ENCODE measurements at regions of chr11 and their contacts with region 1.

Region 1: DNA sequence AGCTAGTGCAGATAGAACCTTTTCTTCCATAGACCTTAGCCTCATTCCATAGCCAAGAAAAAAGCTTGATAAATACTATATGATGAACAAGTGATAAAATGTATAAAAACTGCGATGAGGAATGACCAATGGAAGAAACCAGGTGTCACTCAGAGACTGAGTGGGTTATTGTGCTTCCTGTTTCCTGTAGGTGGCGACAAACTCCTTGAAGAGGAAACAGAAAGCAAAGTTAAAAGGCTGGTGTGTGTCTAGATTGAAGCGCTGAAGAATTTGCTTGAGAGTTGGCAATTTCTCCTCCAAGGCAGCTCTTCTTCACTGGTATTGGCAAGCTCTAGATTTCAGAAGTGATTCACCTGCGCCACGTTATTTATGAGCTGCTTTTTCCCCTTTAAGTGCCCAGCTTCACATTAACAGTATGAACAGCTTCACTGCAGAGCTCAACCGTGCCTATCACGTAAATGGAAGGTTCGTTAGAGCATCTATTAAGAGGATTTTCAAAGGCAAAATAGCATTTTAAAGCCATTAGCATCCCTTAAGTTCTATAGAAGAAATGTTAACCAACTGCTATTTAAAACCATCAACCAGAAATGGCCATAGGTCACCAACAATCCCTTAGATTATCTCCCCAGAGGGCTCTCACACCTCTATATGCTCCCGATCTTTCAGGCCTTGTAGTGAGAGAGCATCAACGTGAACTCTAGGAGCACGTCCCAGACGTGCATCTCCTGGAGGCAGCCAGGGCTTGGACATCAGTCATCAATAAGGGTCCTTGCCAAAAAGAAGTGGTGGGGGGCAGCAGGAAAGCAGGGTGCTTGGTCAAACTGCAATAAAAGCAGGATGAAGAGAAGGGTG is 179.4 kb downstream of the CADM1 start:
- DNase-seq: peak; percentile 33
- H3K4me3 ChIP-seq: no peak overlapping the region; a peak in 1 of 4 replicates
- H3K27ac ChIP-seq: peak overlapping the region in 1 of 2 experiments; percentile 39; a peak in 1 of 4 replicates
- H3K4me1 ChIP-seq: peaks cover 0 to 14% of the 10 kb centered on the region in 2 experiments; a peak in 2 of 4 replicates
- H3K27me3 ChIP-seq: no peaks in the 10 kb centered on the region
- CTCF ChIP-seq: peak; percentile 82
- EP300 ChIP-seq: no peak
- RAD21 ChIP-seq: peak; percentile 90

Region 2: GRCh38 chr11:115314330-115314920 is 10.4 kb before region 1 on chr11:
- CTCF ChIA-PET with region 1: interaction called, 11 read pairs
- POLR2A ChIA-PET with region 1: no interaction called
- DNase-seq: no peak
- H3K4me3 ChIP-seq: no peak overlapping the region
- H3K27ac ChIP-seq: no peak overlapping the region
- H3K4me1 ChIP-seq: peaks cover 0 to 8% of the 10 kb centered on the region in 2 experiments; a peak in 2 of 4 replicates
- H3K27me3 ChIP-seq: no peaks in the 10 kb centered on the region
- CTCF ChIP-seq: no peak
- EP300 ChIP-seq: no peak
- RAD21 ChIP-seq: no peak

Region 3: DNA sequence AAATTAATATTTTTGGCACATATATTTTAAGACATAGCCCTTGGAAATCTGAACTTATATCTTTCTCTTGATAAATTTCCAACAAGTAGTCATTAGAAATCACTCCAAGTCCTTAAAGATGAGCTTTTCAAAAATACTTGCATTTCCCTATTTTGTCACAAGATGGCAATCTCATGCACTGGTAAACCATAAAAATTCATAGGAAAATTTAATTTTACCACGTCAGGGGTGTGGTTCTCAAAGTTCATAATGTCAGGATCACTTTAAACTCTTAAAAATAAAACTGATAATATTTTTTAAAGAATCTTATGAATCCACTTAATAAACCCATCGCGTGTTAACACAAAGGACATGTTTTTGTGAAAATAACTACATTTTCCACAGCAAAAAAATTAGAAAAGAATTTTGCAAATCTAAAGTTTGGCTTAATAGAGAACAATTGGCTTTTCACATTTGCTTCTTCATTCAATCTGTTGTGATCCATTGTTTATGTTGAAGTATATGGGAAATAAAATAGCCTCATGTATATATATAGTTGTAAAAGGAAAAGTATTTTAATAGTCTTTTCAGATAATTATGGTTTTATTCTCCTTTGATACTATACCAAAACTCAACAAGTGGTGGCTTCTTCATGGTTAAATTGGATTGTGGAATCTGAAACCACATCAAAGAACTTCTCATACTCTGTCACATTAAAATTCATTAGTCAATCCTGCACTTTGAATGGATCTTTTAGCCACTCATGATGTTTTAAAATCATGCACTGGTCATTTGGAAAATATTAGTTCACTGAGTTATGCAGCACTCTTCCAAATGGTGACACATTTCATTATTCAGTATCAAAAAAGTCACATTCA is 10.4 kb after region 1 on chr11:
- CTCF ChIA-PET with region 1: interaction called, 22 read pairs
- POLR2A ChIA-PET with region 1: no interaction called
- DNase-seq: peak; percentile 21
- H3K4me3 ChIP-seq: no peak overlapping the region
- H3K27ac ChIP-seq: no peak overlapping the region
- H3K4me1 ChIP-seq: peaks cover 0 to 6% of the 10 kb centered on the region in 2 experiments; a peak in 2 of 4 replicates
- H3K27me3 ChIP-seq: no peaks in the 10 kb centered on the region
- CTCF ChIP-seq: peak; percentile 85
- EP300 ChIP-seq: no peak
- RAD21 ChIP-seq: peak; percentile 83

Region 4: DNA sequence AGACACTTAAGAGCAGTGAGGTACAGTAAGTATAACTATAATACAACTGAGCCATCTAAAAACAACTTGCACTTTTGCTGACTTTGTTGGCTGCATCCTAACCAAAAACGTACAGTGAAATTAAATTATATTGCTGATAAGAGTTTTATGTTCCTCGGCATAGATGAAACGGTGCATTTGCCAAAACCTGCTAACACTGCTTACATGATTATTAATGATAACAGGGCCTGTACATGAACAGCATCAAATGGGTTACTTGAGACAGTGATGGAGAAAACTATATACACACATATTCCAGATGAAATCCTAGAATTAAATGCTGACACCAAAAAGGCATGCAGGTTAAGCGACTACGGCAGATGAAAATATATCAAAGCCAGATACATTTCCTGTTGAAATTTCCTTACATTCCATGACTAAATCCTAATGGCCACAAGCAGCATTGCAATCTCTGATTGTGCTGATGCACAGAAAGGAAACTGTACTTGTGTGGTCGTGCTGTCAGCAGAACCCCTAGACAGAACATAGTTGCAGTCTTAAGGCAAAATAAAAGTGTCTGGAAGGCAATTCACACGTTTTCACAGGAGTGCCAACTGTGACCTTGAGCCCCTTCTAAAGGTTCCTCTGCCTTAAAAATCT is 35.5 kb after region 1 on chr11:
- CTCF ChIA-PET with region 1: no interaction called
- POLR2A ChIA-PET with region 1: no interaction called
- DNase-seq: no peak
- H3K4me3 ChIP-seq: no peak overlapping the region
- H3K27ac ChIP-seq: peak overlapping the region in 1 of 2 experiments; percentile 92; a peak in 2 of 4 replicates
- H3K4me1 ChIP-seq: peaks cover 0 to 34% of the 10 kb centered on the region in 2 experiments; a peak in 2 of 4 replicates
- H3K27me3 ChIP-seq: no peaks in the 10 kb centered on the region
- CTCF ChIP-seq: peak; percentile 40
- EP300 ChIP-seq: peak in 1 of 2 experiments; percentile 62; a peak in 1 of 4 replicates
- RAD21 ChIP-seq: no peak; the same call in 1 of the 2 replicates

Region 5: GRCh38 chr11:115590254-115590653 is 265.4 kb after region 1 on chr11:
- CTCF ChIA-PET with region 1: no interaction called
- POLR2A ChIA-PET with region 1: no interaction called
- DNase-seq: peak; percentile 71
- H3K4me3 ChIP-seq: no peak overlapping the region
- H3K27ac ChIP-seq: peak overlapping the region in 1 of 2 experiments; percentile 75; a peak in 2 of 4 replicates
- H3K4me1 ChIP-seq: peaks cover 0 to 11% of the 10 kb centered on the region in 2 experiments; a peak in 1 of 4 replicates
- H3K27me3 ChIP-seq: no peaks in the 10 kb centered on the region
- CTCF ChIP-seq: no peak
- EP300 ChIP-seq: peak in 1 of 2 experiments; percentile 75; a peak in 1 of 4 replicates
- RAD21 ChIP-seq: peak; percentile 20; the same call in 1 of the 2 replicates